ENCODE measurements at regions of chr1 and their contacts with region 1.

Region 1: DNA sequence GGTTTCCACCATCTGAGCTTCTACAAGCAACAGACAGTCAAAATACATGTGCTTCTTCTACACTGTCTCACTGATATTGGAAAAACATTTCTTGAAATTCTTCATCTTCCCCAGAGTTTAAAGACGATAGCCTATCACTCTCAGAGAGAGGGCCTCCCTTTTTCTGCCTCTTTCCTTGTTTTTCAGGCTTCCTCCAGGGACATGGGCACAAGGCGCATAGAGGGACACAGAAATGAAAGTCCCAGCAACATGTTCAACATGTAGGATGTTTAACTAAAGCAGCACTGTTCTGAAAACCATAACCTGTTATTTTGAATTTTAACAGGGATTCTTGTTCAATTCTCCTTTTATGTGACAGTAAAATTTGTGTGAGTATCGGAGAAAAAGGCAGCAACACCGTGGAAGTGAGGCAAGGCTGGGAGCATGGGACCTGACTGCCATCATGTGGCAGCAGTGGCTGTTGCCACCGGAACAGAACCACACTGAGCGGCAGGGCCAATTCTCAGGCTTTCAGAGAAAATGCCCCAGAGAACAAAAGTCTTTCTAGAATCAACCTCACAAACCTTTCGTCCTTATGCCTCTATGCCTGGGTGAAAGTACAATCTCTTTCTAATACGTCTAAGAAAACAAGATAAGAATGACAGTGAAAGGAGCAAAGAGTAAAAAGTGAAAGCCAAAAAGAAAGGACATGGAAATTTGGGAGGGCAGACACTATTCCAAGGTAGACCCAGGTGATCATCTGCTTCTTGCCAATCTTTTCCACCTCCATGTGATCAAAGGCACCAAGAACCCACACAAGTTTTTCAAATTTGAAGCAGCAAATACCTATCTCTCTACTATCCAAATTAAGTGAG is 54.5 kb downstream of the PCNX2 start:
- DNase-seq: no peak
- ATAC-seq: peak; percentile 96
- H3K4me3 ChIP-seq: no peak overlapping the region
- H3K27ac ChIP-seq: no peak overlapping the region
- H3K4me1 ChIP-seq: no peaks in the 10 kb centered on the region
- H3K27me3 ChIP-seq: no peaks in the 10 kb centered on the region
- CTCF ChIP-seq: peak; percentile 64 to 90 (median 74); a peak in 4 of 6 replicates
- EP300 ChIP-seq: no peak
- POLR2A ChIP-seq: no peak
- RAD21 ChIP-seq: peak; percentile 76

Region 2: GRCh38 chr1:231866392-231867331 is 1374.4 kb before region 1 on chr1:
- CTCF ChIA-PET with region 1: interaction called, 5 read pairs
- POLR2A ChIA-PET with region 1: no interaction called
- RAD21 ChIA-PET with region 1: interaction called, 3 read pairs
- SMC1A ChIA-PET with region 1: interaction called, 3 read pairs
- in situ Hi-C with region 1: loop called (anchors 10 kb)
- intact Hi-C with region 1: loop called (anchors 5 kb)
- DNase-seq: no peak
- ATAC-seq: peak; percentile 47
- H3K4me3 ChIP-seq: no peak overlapping the region
- H3K27ac ChIP-seq: no peak overlapping the region
- H3K4me1 ChIP-seq: no peaks in the 10 kb centered on the region
- H3K27me3 ChIP-seq: no peaks in the 10 kb centered on the region; a peak in 1 of 4 replicates
- CTCF ChIP-seq: peak; percentile 73 to 81 (median 79)
- EP300 ChIP-seq: no peak
- POLR2A ChIP-seq: no peak
- RAD21 ChIP-seq: peak; percentile 78

Region 3: GRCh38 chr1:231872461-231872910 is 1368.6 kb before region 1 on chr1:
- CTCF ChIA-PET with region 1: interaction called, 5 read pairs
- POLR2A ChIA-PET with region 1: no interaction called
- RAD21 ChIA-PET with region 1: interaction called, 3 read pairs
- SMC1A ChIA-PET with region 1: no interaction called
- in situ Hi-C with region 1: loop called (anchors 10 kb)
- intact Hi-C with region 1: loop called (anchors 5 kb)
- DNase-seq: no peak
- ATAC-seq: no peak
- H3K4me3 ChIP-seq: no peak overlapping the region
- H3K27ac ChIP-seq: no peak overlapping the region
- H3K4me1 ChIP-seq: no peaks in the 10 kb centered on the region
- H3K27me3 ChIP-seq: no peaks in the 10 kb centered on the region
- CTCF ChIP-seq: no peak
- EP300 ChIP-seq: no peak
- POLR2A ChIP-seq: no peak
- RAD21 ChIP-seq: no peak

Region 4: DNA sequence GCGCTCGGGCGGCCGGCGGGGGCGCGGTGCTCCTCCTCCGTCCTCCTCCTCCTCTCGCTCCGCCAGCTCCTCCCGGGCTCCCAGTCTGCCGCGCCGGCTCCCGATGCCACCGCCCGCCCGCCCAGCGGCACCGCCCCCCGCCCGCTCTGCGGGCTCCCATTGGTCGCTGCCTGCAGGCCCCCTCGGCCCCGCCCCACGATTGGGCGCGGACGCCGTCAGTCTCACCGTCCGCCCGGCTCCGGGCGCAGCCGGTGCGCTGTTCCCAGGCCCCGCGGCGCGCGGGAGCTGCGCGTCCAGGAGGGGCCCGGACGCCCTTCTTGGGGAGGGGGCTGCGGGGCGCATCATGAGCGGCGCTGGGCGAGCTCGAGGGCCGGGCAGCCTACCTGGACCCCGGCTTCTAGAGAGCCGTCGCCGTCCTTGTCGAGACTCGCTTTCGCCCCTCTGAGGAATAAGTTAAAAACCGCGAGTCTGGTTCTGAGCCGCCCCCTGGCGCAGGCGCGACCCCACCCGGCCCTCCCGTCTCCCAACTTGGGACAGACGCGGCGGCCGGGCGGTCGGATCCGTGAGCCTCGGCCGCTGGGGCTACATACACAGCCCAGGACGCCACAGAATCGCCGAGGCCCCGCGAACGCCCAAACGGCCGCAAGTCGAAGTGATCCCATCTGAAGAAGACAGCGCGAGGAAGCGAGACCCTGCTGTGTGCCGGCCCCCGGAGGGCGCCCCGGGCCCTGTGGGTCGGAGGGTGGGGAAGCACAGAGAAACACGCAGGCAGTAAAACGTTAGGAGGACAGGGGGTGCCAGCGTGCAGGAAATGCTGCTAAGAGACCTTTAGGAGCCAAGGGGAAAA is 610.8 kb before region 1 on chr1 and contains the start of gene SIPA1L2:
- CTCF ChIA-PET with region 1: interaction called, 6 read pairs
- POLR2A ChIA-PET with region 1: no interaction called
- RAD21 ChIA-PET with region 1: interaction called, 3 read pairs
- SMC1A ChIA-PET with region 1: no interaction called
- in situ Hi-C with region 1: loop called (anchors 5 kb)
- intact Hi-C with region 1: loop called (anchors 1 kb)
- DNase-seq: peak; percentile 8
- ATAC-seq: peak; percentile 100
- H3K4me3 ChIP-seq: peak within 1 kb of the TSS; percentile 83
- H3K27ac ChIP-seq: no peak within 1 kb of the TSS
- H3K4me1 ChIP-seq: no peaks in the 10 kb centered on the region
- H3K27me3 ChIP-seq: peaks cover 2 to 22% of the 10 kb centered on the region in 2 experiments; a peak in 3 of 4 replicates
- CTCF ChIP-seq: peak in 2 of 3 experiments; percentile 29 to 41; a peak in 4 of 6 replicates
- EP300 ChIP-seq: no peak
- POLR2A ChIP-seq: no peak
- RAD21 ChIP-seq: peak; percentile 25; the same call in 1 of the 2 replicates
- polyA plus RNA-seq, gene SIPA1L2: not detected

Region 5: DNA sequence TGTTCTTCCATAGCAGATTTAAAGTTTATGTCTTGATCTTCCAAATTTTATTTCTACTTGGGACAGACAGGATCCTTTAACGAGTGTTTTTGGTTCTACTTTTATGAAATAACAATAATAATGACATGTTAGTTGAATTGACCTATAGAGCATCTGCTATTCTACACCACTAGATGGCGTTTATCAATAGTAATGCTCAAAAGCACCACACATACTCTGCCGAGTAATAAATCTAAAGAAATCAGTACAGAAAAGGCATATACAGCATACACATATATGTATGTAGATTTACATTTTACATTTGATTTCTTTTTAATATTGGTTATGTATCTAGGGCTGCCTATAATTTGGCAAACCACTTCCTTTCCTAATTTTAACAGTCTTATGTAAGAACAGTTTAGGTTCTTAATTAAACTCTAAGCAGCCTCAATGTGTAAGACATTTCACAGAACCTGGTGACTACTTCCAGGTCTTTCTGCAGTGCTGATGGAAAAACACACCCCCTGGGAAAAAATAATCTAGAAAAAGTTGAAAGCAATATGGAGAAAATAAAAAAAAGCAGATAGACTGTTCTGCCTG is 605.2 kb before region 1 on chr1:
- CTCF ChIA-PET with region 1: interaction called, 6 read pairs
- POLR2A ChIA-PET with region 1: no interaction called
- RAD21 ChIA-PET with region 1: interaction called, 3 read pairs
- SMC1A ChIA-PET with region 1: no interaction called
- in situ Hi-C with region 1: loop called (anchors 5 kb)
- intact Hi-C with region 1: loop called (anchors 1 kb)
- DNase-seq: no peak
- ATAC-seq: peak; percentile 91
- H3K4me3 ChIP-seq: no peak overlapping the region
- H3K27ac ChIP-seq: no peak overlapping the region
- H3K4me1 ChIP-seq: no peaks in the 10 kb centered on the region
- H3K27me3 ChIP-seq: 0 out of 4 replicates have a peak, but pooled peaks cover 0 to under 1% of the 10 kb centered on the region in 2 experiments
- CTCF ChIP-seq: peak; percentile 56 to 69 (median 67); a peak in 5 of 6 replicates
- EP300 ChIP-seq: no peak
- POLR2A ChIP-seq: no peak
- RAD21 ChIP-seq: peak; percentile 68

Region 6: GRCh38 chr1:233086961-233087881 is 153.8 kb before region 1 on chr1:
- CTCF ChIA-PET with region 1: no interaction called
- POLR2A ChIA-PET with region 1: no interaction called
- RAD21 ChIA-PET with region 1: no interaction called
- SMC1A ChIA-PET with region 1: no interaction called
- in situ Hi-C with region 1: no loop called
- intact Hi-C with region 1: no loop called
- DNase-seq: no peak
- ATAC-seq: no peak
- H3K4me3 ChIP-seq: no peak overlapping the region
- H3K27ac ChIP-seq: no peak overlapping the region
- H3K4me1 ChIP-seq: no peaks in the 10 kb centered on the region
- H3K27me3 ChIP-seq: no peaks in the 10 kb centered on the region
- CTCF ChIP-seq: no peak
- EP300 ChIP-seq: no peak
- POLR2A ChIP-seq: no peak
- RAD21 ChIP-seq: no peak

Region 7: GRCh38 chr1:233257786-233258185 is 16.7 kb after region 1 on chr1:
- CTCF ChIA-PET with region 1: no interaction called
- POLR2A ChIA-PET with region 1: no interaction called
- RAD21 ChIA-PET with region 1: no interaction called
- SMC1A ChIA-PET with region 1: no interaction called
- in situ Hi-C with region 1: no loop called
- intact Hi-C with region 1: no loop called
- DNase-seq: no peak
- ATAC-seq: no peak
- H3K4me3 ChIP-seq: no peak overlapping the region
- H3K27ac ChIP-seq: no peak overlapping the region
- H3K4me1 ChIP-seq: peaks cover 8% of the 10 kb centered on the region
- H3K27me3 ChIP-seq: no peaks in the 10 kb centered on the region
- CTCF ChIP-seq: no peak
- EP300 ChIP-seq: no peak
- POLR2A ChIP-seq: no peak
- RAD21 ChIP-seq: no peak

Region 8: DNA sequence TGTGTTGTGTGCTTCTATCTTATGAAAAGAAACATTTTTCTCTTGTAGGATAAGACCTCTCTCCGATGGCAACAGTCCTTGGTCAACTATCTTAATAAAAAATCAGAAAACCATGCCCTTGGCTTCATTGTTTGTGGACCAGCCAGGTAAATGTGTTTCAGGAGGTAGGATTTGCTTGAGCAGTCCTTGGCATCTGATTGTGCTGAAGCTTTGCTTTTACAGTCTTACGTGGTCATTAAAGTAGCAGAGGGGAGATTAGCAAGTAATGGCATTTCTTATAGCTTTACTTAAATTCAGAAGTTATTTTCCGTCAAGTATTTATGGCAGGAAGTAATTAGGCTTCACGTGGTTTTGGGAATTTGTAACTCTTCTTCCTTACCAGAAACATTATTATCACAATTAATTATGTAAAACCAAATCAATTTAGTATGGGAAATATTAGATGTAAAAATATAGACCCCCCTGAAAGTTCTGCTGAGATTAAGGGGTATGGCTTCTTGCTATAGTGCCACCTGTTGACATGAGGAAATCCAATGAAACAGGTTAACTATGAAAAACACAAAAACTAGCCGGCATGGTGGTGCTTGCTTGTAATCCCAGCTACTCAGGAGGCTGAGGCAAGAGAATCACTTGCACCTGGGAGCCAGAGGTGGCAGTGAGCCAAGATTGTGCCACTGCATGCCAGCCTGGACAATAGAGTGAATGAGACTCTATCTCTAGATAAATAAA is 135.5 kb after region 1 on chr1:
- CTCF ChIA-PET with region 1: no interaction called
- POLR2A ChIA-PET with region 1: no interaction called
- RAD21 ChIA-PET with region 1: no interaction called
- SMC1A ChIA-PET with region 1: no interaction called
- in situ Hi-C with region 1: no loop called
- intact Hi-C with region 1: no loop called
- DNase-seq: no peak
- ATAC-seq: no peak
- H3K4me3 ChIP-seq: no peak overlapping the region
- H3K27ac ChIP-seq: no peak overlapping the region
- H3K4me1 ChIP-seq: 0 out of 2 replicates have a peak, but pooled peaks cover 4% of the 10 kb centered on the region
- H3K27me3 ChIP-seq: no peaks in the 10 kb centered on the region; a peak in 1 of 4 replicates
- CTCF ChIP-seq: no peak
- EP300 ChIP-seq: no peak
- POLR2A ChIP-seq: no peak
- RAD21 ChIP-seq: no peak